Caco-2 (cell line): ENCODE measurements at regions of chr14 and their contacts with region 1.

Region 1: DNA sequence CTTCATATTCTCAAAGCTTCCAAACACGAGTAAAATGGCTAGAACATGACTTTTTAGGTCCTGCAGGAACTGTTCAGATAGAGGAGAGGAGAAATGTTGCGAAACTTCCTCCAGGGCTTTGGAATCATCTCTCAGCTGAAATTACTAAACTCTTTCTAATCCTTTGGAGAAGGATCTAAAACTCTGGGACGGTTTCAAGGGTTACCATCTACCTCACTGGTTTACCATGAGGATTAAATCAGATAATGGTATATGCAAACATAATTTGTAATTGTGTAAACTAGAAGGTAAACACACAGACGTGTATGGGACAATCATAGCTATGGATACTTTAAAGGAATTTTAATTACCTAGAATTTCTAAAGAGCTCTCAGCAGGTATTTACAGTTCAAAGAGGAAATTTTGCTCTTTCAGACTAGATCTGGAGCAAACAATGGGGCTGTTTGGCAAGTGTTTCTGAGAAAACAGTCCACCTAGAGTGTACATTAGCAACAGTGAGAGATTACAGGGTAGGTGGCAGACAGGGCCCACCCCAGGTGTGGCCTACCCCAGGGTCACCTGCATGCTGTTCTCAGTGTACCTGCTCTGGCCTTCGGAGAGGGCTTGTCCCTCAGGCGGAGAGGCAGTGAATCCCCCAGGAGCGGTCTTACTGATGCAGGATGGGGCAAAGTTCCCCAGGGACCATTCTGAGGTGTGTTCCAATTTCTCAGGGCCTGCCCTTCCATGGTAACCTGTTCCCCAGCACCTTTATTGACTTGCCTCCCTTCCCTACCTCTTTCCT is 124.7 kb upstream of the MAX start:
- DNase-seq: peak; percentile 93 to 97
- H3K4me3 ChIP-seq: no peak overlapping the region
- H3K4me3 Mint-ChIP-seq: peak overlapping the region; percentile 59
- H3K27ac Mint-ChIP-seq: peak overlapping the region; percentile 97
- H3K4me1 ChIP-seq: peaks cover 81% of the 10 kb centered on the region
- H3K4me1 Mint-ChIP-seq: peaks cover 55% of the 10 kb centered on the region
- H3K27me3 ChIP-seq: no peaks in the 10 kb centered on the region
- H3K27me3 Mint-ChIP-seq: no peaks in the 10 kb centered on the region
- CTCF ChIP-seq: no peak

Region 2: DNA sequence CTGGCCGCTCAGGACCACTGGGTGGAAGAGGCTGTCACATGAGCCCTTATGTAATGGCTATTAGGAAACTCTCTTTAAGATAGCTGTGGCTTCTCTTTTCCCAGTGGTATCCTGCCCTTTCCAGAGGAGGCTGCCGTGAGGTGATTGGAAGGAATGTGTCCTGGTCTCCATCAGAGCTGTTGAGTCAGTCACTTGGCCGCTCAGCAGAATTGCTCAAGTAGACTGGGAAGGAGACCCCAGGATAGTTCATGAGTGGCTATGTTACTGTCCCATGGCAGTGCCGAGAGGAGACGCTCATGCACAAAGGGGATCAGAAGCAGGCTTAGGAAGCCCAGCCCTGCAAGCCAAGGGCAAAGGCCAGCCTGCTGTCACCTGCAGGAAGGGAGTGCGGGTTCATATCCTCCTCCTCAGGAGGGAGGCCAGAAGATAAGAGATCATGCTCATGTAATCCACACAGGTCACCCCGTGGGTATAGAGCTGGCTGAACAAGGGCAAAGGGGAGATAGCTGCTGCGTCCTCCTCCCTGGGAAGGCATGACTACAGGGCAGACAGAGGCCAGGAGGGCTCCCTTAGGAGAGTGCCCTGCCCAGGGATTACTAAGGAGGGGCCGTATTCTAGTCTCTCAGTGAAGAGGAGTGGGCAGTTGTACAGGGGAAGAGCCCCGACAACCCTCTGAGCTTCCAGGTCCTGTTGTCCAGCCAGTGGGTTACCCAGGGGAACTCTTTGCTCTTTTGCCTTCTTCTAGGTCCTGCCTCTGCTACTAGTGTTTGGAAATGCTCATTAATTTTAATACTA is 12.3 kb after region 1 on chr14:
- CTCF ChIA-PET with region 1: interaction called, 7 read pairs
- POLR2A ChIA-PET with region 1: interaction called, 22 read pairs
- intact Hi-C with region 1: loop called (anchors 1 kb)
- DNase-seq: peak; percentile 66 to 89
- H3K4me3 ChIP-seq: no peak overlapping the region
- H3K4me3 Mint-ChIP-seq: peak overlapping the region; percentile 31
- H3K27ac Mint-ChIP-seq: peak overlapping the region; percentile 83
- H3K4me1 ChIP-seq: peaks cover 74% of the 10 kb centered on the region
- H3K4me1 Mint-ChIP-seq: peaks cover 52% of the 10 kb centered on the region
- H3K27me3 ChIP-seq: no peaks in the 10 kb centered on the region
- H3K27me3 Mint-ChIP-seq: no peaks in the 10 kb centered on the region
- CTCF ChIP-seq: no peak

Region 3: GRCh38 chr14:65255536-65256461 is 28.8 kb after region 1 on chr14:
- CTCF ChIA-PET with region 1: interaction called, 11 read pairs
- POLR2A ChIA-PET with region 1: interaction called, 15 read pairs
- intact Hi-C with region 1: loop called (anchors 1 kb)
- DNase-seq: peak; percentile 94 to 97
- H3K4me3 ChIP-seq: peak overlapping the region; percentile 13; the same call in 1 of the 2 replicates
- H3K4me3 Mint-ChIP-seq: peak overlapping the region; percentile 65
- H3K27ac Mint-ChIP-seq: peak overlapping the region; percentile 90
- H3K4me1 ChIP-seq: peaks cover 58% of the 10 kb centered on the region
- H3K4me1 Mint-ChIP-seq: peaks cover 37% of the 10 kb centered on the region
- H3K27me3 ChIP-seq: no peaks in the 10 kb centered on the region
- H3K27me3 Mint-ChIP-seq: no peaks in the 10 kb centered on the region
- CTCF ChIP-seq: peak in 1 of 2 experiments; percentile 45

Region 4: DNA sequence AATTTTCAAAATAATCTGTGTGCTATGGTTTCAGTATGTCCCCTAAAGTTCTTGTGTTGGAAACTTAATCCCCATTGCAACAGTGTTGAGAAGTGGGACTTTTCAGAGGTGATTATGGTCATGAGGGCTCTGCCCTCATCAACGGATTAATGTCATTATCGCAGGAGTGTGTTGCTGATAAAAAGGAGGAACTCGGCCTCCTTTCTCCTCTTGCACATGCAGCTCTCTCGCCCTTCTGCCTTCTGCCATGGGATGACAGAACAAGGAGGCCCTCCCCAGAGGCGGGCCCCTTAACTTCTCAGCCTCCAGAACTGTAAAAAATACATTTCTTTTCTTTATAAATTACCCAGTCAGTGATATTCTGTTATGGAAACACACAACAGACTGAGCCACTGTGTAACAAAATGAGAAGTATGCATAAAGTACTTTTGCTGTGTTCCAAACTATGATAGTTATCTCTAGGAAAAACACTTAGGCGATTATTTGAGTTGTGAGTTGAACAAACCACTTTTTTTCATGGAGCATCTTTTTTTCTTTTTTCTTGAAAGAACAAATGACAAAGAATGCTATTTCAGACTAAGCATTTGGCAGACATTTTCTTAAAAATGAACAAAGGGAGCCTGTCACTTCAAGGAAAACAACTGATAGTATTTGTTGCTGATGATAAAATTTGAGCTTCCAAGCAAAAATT is 50.7 kb after region 1 on chr14:
- CTCF ChIA-PET with region 1: no interaction called
- POLR2A ChIA-PET with region 1: no interaction called
- intact Hi-C with region 1: loop called (anchors 1 kb)
- DNase-seq: no peak
- H3K4me3 ChIP-seq: no peak overlapping the region
- H3K4me3 Mint-ChIP-seq: no peak overlapping the region
- H3K27ac Mint-ChIP-seq: no peak overlapping the region
- H3K4me1 ChIP-seq: peaks cover 33% of the 10 kb centered on the region
- H3K4me1 Mint-ChIP-seq: peaks cover 13% of the 10 kb centered on the region
- H3K27me3 ChIP-seq: no peaks in the 10 kb centered on the region
- H3K27me3 Mint-ChIP-seq: no peaks in the 10 kb centered on the region
- CTCF ChIP-seq: no peak

Region 5: DNA sequence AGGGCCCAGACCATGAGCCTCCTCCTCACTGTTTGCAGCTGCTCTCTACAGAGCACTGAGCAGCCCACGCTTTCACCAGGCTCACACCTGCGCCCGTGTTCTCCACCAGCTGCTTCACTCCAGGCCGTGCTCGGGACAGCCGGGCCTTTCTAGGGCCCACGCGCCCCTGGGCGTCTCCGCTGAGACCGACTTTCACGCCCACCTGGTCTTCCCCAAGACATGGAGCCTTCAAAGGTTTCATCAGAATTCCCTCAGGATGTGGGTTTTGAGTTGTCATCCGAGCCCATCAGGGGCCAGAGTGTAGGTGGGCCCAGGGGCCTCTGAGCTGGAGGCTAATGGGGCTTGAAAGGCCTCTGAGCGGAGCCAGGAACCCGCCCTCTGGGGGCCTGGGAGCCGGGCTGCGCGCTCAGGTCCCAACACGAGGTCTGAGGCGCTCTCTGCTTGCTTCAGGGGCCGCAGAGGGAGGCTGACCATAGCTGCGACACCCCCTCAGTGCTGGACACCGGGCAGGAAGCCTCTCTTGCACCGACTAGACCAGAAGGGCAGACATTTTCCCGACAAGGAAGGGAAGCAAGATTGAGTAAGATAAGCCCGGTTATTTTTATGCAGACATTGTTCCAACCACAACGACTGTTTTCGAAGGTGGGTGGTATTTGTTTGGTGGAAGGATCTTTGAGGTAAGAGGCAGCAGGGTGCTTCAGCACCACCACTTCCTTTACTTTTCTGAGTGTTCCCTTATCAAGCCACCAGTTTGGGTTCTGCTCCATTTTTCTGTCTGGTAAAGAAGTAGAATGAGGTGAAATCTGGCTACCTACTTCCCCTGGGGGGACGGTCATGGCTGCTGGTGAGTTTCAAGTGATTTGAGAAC is 60.5 kb after region 1 on chr14:
- CTCF ChIA-PET with region 1: no interaction called
- POLR2A ChIA-PET with region 1: no interaction called
- intact Hi-C with region 1: loop called (anchors 2 kb)
- DNase-seq: no peak
- H3K4me3 ChIP-seq: no peak overlapping the region
- H3K4me3 Mint-ChIP-seq: no peak overlapping the region
- H3K27ac Mint-ChIP-seq: no peak overlapping the region
- H3K4me1 ChIP-seq: peaks cover 7% of the 10 kb centered on the region; the same call in 1 of the 2 replicates
- H3K4me1 Mint-ChIP-seq: peaks cover 16% of the 10 kb centered on the region
- H3K27me3 ChIP-seq: no peaks in the 10 kb centered on the region
- H3K27me3 Mint-ChIP-seq: no peaks in the 10 kb centered on the region
- CTCF ChIP-seq: no peak

Region 6: GRCh38 chr14:65302571-65303189 is 75.7 kb after region 1 on chr14:
- CTCF ChIA-PET with region 1: no interaction called
- POLR2A ChIA-PET with region 1: interaction called, 5 read pairs
- intact Hi-C with region 1: loop called (anchors 1 kb)
- DNase-seq: no peak
- H3K4me3 ChIP-seq: no peak overlapping the region
- H3K4me3 Mint-ChIP-seq: peak overlapping the region; percentile 12
- H3K27ac Mint-ChIP-seq: peak overlapping the region; percentile 80
- H3K4me1 ChIP-seq: peaks cover 67% of the 10 kb centered on the region
- H3K4me1 Mint-ChIP-seq: peaks cover 44% of the 10 kb centered on the region
- H3K27me3 ChIP-seq: no peaks in the 10 kb centered on the region
- H3K27me3 Mint-ChIP-seq: no peaks in the 10 kb centered on the region
- CTCF ChIP-seq: no peak

Region 7: GRCh38 chr14:65333943-65334687 is 107.1 kb after region 1 on chr14:
- CTCF ChIA-PET with region 1: interaction called, 3 read pairs
- POLR2A ChIA-PET with region 1: interaction called, 4 read pairs
- intact Hi-C with region 1: loop called (anchors 1 kb)
- DNase-seq: peak; percentile 60 to 78
- H3K4me3 ChIP-seq: no peak overlapping the region
- H3K4me3 Mint-ChIP-seq: peak overlapping the region; percentile 63
- H3K27ac Mint-ChIP-seq: peak overlapping the region; percentile 96
- H3K4me1 ChIP-seq: peaks cover 96% of the 10 kb centered on the region
- H3K4me1 Mint-ChIP-seq: peaks cover 52% of the 10 kb centered on the region
- H3K27me3 ChIP-seq: no peaks in the 10 kb centered on the region
- H3K27me3 Mint-ChIP-seq: no peaks in the 10 kb centered on the region
- CTCF ChIP-seq: no peak